H1 (cell line): ENCODE measurements at regions of chr1 and their contacts with region 1.

Region 1: DNA sequence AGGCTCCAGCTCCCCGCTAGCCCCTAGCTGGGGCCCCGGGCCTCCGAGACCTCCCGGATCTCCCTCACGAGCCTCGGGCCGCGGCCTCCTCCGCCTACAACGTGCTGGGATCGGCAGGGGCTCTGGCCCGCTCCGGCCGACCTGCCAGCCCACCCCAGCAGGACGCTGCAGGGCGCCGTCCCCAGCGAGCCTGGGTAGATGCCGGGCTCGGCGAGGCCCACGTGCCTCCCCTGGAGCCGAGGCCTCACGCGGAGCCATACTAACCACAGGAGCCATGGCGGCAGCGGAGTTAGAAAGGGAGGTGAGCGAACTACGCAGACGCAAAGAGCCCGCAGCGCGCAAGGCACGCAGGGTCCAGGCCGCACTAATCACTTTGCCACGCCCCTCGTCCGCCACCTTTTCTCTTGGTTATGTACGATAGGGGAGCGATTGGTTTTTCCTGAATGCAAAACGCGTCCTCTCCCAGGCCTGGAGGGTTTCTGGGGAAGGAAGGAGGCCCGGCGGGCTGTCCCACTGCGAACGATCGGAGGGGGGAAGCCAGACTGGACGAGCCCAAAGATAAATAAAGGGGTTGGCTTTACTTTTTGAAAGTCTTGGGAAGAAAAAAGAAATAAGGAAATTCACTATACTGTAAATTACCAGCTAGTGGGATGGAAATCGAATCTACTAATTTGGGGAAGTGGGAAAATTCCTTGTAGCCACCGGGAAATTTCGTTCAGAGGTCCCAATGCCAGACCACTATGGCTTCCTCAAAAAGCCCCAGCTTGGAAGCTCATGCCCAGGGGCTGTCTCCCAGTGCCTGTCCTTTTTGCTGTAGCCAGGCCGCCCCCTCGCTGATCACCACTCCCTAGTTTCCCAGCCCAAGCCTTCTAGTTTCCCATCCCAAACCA is at the start of gene RPL22:
- DNase-seq: peak; percentile 94 to 96
- H3K4me3 ChIP-seq: peak within 1 kb of the TSS; percentile 69 to 98 (median 86)
- H3K27ac ChIP-seq: peak within 1 kb of the TSS; percentile 95
- H3K4me1 ChIP-seq: peaks cover 6 to 13% (median 8%) of the 10 kb centered on the region in 4 experiments; a peak in 6 of 7 replicates
- H3K27me3 ChIP-seq: no peaks in the 10 kb centered on the region
- CTCF ChIP-seq: no peak; a peak in 1 of 4 replicates
- EP300 ChIP-seq: peak in 1 of 2 experiments; percentile 99; a peak in 2 of 3 replicates
- POLR2A ChIP-seq: peak; percentile 44 to 89
- RAD21 ChIP-seq: no peak
- total RNA-seq, gene RPL22: 521 and 545 TPM in 2 replicates

Region 2: DNA sequence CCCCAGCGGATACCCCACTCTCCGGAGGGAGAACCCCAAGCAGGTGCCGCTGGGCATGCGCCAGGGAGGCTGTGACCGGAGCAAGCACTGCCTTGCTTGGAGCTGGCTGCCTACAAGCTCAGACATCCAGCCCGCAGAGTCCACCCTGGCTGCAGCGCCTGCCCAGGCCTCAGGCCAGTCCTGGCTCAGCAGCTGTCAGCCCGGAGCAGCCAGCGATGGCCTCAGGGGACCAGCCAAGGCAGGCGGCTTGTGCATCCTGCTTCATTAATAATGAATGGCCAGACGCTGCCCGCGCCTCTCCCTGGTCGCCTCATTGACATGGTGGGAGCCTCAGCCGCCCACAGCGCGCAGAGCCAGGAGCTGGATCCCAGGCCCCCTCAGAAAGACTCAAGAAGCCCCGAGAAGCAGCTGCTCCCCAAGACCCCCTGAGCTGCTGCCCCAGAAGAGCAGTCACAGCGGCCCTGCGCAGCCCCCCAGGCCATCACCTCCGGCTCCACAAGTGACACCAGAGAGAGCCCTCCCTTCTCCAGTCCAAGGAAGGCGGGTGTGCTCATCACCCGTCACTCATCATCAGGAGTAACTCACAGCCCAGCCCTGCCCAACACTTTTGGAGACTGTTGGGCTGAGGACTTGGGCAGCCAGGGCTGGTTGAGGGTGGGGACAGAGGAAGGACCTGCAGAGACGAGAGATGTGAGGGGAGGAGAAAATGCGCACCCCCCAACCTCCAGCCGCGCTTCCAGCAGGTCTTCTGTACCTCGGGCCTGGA is 134.3 kb before region 1 on chr1:
- CTCF ChIA-PET with region 1: no interaction called
- POLR2A ChIA-PET with region 1: no interaction called
- DNase-seq: no peak
- H3K4me3 ChIP-seq: no peak overlapping the region
- H3K27ac ChIP-seq: no peak overlapping the region
- H3K4me1 ChIP-seq: no peaks in the 10 kb centered on the region
- H3K27me3 ChIP-seq: no peaks in the 10 kb centered on the region
- CTCF ChIP-seq: no peak
- EP300 ChIP-seq: no peak
- POLR2A ChIP-seq: no peak
- RAD21 ChIP-seq: no peak

Region 3: GRCh38 chr1:6185635-6186382 is 13.7 kb before region 1 on chr1:
- CTCF ChIA-PET with region 1: interaction called, 41 read pairs
- POLR2A ChIA-PET with region 1: interaction called, 65 read pairs
- DNase-seq: no peak
- H3K4me3 ChIP-seq: no peak overlapping the region
- H3K27ac ChIP-seq: no peak overlapping the region
- H3K4me1 ChIP-seq: peaks cover 7 to 12% (median 8%) of the 10 kb centered on the region in 4 experiments
- H3K27me3 ChIP-seq: peaks cover 0 to 12% (median 6%) of the 10 kb centered on the region in 4 experiments; a peak in 5 of 7 replicates
- CTCF ChIP-seq: peak; percentile 29 to 71 (median 61)
- EP300 ChIP-seq: no peak
- POLR2A ChIP-seq: peak in 1 of 2 experiments; percentile 83; a peak in 2 of 3 replicates
- RAD21 ChIP-seq: peak; percentile 59 to 64

Region 4: GRCh38 chr1:6235296-6235677 is 35.7 kb after region 1 on chr1:
- CTCF ChIA-PET with region 1: interaction called, 353 read pairs
- POLR2A ChIA-PET with region 1: interaction called, 78 read pairs
- DNase-seq: no peak
- H3K4me3 ChIP-seq: peak overlapping the region; percentile 77 to 94 (median 86)
- H3K27ac ChIP-seq: peak overlapping the region; percentile 2; the same call in 1 of the 2 replicates
- H3K4me1 ChIP-seq: peaks cover 4 to 25% (median 19%) of the 10 kb centered on the region in 4 experiments
- H3K27me3 ChIP-seq: no peaks in the 10 kb centered on the region
- CTCF ChIP-seq: no peak
- EP300 ChIP-seq: no peak
- POLR2A ChIP-seq: no peak
- RAD21 ChIP-seq: no peak